A549 (cell line): ENCODE measurements at regions of chr3 and their contacts with region 1.

Region 1: GRCh38 chr3:4633078-4634004 is 140.2 kb downstream of the ITPR1 start:
- DNase-seq: peak; percentile 67 to 69
- ATAC-seq: peak; percentile 80 to 91
- H3K4me3 ChIP-seq: no peak overlapping the region
- H3K27ac ChIP-seq: no peak overlapping the region
- H3K4me1 ChIP-seq: no peaks in the 10 kb centered on the region
- CTCF ChIP-seq: peak; percentile 95
- EP300 ChIP-seq: no peak
- POLR2A ChIP-seq: no peak
- RAD21 ChIP-seq: peak; percentile 84 to 90

Region 2: DNA sequence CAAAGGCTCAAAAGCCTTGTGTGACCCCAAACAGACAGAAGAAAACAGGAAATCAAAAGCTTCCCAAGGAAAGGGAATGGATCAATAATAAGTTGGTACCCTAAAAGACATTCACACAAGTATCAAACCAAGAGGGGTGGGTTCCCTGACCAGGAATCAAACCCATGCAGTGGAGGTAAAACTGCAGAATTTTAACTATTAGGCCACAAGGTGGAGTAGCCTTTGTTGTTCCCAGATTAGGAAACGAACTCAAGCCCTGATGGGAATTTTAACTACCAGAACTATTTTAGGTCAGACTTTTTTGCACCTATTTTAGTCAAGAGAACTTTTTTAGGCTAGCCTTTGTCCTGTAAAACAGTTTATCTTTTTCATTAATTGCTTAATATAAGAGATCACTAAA is 298.8 kb before region 1 on chr3:
- CTCF ChIA-PET with region 1: interaction called, 13 read pairs
- POLR2A ChIA-PET with region 1: no interaction called
- DNase-seq: no peak
- ATAC-seq: no peak
- H3K4me3 ChIP-seq: no peak overlapping the region
- H3K27ac ChIP-seq: no peak overlapping the region
- H3K4me1 ChIP-seq: no peaks in the 10 kb centered on the region
- CTCF ChIP-seq: 0 out of 3 replicates have a peak, but pooled peaks have one; percentile 10
- EP300 ChIP-seq: no peak
- POLR2A ChIP-seq: no peak
- RAD21 ChIP-seq: no peak

Region 3: DNA sequence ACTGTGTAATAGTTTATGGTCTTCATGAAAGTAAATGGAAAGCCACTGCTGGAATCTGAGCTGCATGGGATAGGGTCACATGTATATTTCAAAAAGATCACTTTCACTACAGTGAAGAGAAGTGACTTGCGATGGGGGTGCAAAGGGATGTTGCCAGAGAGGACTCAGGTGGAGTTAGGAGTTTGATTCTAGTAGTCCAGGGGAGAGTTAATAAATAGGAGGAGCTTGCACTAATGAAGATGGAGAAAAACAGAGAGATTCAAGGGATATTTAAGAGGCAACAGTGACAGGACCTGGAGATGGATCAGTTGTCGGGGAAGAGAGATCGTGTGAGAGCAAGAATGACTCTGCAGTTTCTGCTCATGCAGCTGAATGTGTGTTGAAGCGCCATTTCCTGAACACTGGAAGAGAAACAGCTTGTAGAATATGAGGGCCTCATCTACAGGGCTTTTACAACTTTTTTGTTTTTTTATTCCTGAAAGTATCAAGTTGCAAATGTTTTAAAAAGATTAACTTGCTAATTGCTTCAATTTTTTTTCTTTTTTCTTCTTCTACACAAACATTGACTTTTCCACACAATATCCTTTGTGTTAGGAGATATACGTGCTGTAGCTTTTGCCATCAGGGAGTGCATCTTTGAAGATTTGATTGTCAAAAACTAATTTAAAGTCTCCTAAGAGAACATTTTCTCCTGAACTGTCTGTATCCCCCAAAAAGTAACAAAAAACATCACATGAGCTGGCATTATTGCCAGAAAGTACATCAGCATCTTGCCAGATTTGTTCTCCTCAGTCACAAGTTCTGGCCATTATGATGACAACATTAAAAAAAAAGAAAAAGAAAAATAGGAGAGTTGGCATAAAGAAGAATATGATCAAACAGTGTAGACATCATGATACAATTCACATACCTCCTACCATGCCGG is 292.7 kb before region 1 on chr3:
- CTCF ChIA-PET with region 1: interaction called, 21 read pairs
- POLR2A ChIA-PET with region 1: no interaction called
- DNase-seq: no peak
- ATAC-seq: no peak
- H3K4me3 ChIP-seq: no peak overlapping the region
- H3K27ac ChIP-seq: 0 out of 6 replicates have a peak overlapping the region, but pooled peaks of 1 of the 2 experiments have one; percentile 17
- H3K4me1 ChIP-seq: no peaks in the 10 kb centered on the region
- CTCF ChIP-seq: no peak
- EP300 ChIP-seq: no peak
- POLR2A ChIP-seq: no peak
- RAD21 ChIP-seq: no peak

Region 4: GRCh38 chr3:4350789-4351163 is 282.6 kb before region 1 on chr3:
- CTCF ChIA-PET with region 1: interaction called, 121 read pairs
- POLR2A ChIA-PET with region 1: interaction called, 6 read pairs
- DNase-seq: peak; percentile 70 to 76
- ATAC-seq: peak; percentile 84 to 89
- H3K4me3 ChIP-seq: no peak overlapping the region
- H3K27ac ChIP-seq: no peak overlapping the region
- H3K4me1 ChIP-seq: 0 out of 3 replicates have a peak, but pooled peaks cover 3% of the 10 kb centered on the region
- CTCF ChIP-seq: peak; percentile 89
- EP300 ChIP-seq: no peak
- POLR2A ChIP-seq: no peak
- RAD21 ChIP-seq: peak; percentile 85 to 88

Region 5: DNA sequence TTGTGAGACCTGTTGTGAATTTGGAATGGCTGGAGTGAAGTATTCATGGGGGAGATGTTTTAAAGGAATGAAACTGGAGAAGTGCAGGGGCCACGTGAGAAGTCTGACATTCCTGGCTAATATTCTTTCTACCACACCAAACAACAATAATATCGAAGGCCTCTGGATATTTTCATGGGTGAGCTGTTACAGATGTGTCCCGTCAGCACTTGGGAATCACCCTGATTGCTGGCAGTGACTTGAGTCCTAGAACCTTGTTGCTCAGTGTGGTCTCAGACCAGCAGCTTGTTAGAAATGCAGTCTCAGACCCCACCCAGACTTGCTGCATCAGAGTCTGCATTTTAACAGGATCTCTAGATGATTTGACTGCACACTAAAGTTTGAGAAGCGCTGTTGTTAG is 26.4 kb before region 1 on chr3:
- CTCF ChIA-PET with region 1: interaction called, 13 read pairs
- POLR2A ChIA-PET with region 1: no interaction called
- DNase-seq: no peak
- ATAC-seq: no peak; a peak in 1 of 6 replicates
- H3K4me3 ChIP-seq: no peak overlapping the region
- H3K27ac ChIP-seq: no peak overlapping the region
- H3K4me1 ChIP-seq: peaks cover 8% of the 10 kb centered on the region; the same call in 1 of the 3 replicates
- CTCF ChIP-seq: no peak
- EP300 ChIP-seq: no peak
- POLR2A ChIP-seq: no peak
- RAD21 ChIP-seq: no peak

Region 6: GRCh38 chr3:4644951-4645350 is 11.6 kb after region 1 on chr3:
- CTCF ChIA-PET with region 1: interaction called, 15 read pairs
- POLR2A ChIA-PET with region 1: no interaction called
- DNase-seq: no peak
- ATAC-seq: no peak
- H3K4me3 ChIP-seq: no peak overlapping the region
- H3K27ac ChIP-seq: no peak overlapping the region
- H3K4me1 ChIP-seq: no peaks in the 10 kb centered on the region
- CTCF ChIP-seq: no peak
- EP300 ChIP-seq: no peak
- POLR2A ChIP-seq: no peak
- RAD21 ChIP-seq: no peak

Region 7: DNA sequence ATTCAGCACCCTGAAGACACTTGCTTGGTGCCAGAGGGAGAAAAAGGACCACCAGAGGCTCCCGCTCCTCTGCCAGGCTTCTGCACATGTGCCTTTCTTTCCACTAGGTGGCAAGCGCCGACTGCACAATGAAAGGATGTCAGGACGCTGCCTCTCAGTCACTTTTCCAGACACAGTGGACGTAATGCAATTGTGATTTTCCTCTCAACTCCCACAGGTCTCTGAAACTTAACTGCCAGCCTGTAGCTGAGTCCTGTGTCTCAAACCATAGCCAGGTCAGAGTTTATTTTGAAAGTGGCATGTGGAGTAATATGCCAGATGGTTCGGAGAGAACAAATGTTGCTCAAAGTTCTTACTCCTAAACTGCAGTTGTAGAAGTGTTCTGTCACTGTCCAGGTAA is 22.7 kb after region 1 on chr3:
- CTCF ChIA-PET with region 1: interaction called, 14 read pairs
- POLR2A ChIA-PET with region 1: no interaction called
- DNase-seq: peak; percentile 62 to 77
- ATAC-seq: peak; percentile 98 to 100
- H3K4me3 ChIP-seq: no peak overlapping the region
- H3K27ac ChIP-seq: no peak overlapping the region
- H3K4me1 ChIP-seq: no peaks in the 10 kb centered on the region
- CTCF ChIP-seq: peak; percentile 93
- EP300 ChIP-seq: no peak
- POLR2A ChIP-seq: no peak
- RAD21 ChIP-seq: peak; percentile 97 to 98

Region 8: DNA sequence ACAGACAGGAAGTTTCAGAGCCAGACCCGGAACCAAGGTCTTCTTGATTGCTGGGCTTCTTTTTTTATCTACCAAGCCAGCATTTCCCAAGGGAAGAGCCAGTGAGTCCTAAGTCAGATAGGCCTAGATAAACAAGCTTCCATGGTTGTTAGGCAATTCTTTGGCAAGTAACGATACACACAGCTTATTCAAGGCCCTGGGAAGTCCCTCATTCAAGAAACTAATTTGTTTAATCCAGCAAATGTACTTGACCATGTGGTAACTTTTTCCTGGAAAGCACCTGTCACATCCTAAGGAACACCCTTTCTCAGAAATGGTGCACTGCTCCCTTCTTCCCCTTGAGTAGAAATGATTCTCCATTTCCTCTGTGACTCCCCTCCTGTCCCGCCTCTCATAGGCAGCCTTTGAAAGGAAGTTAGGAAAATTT is 69.7 kb after region 1 on chr3:
- CTCF ChIA-PET with region 1: no interaction called
- POLR2A ChIA-PET with region 1: no interaction called
- DNase-seq: no peak
- ATAC-seq: no peak
- H3K4me3 ChIP-seq: no peak overlapping the region
- H3K27ac ChIP-seq: no peak overlapping the region
- H3K4me1 ChIP-seq: no peaks in the 10 kb centered on the region
- CTCF ChIP-seq: no peak
- EP300 ChIP-seq: no peak
- POLR2A ChIP-seq: no peak
- RAD21 ChIP-seq: no peak